K562 (cell line): ENCODE measurements at regions of chr3 and their contacts with region 1.

Region 1: DNA sequence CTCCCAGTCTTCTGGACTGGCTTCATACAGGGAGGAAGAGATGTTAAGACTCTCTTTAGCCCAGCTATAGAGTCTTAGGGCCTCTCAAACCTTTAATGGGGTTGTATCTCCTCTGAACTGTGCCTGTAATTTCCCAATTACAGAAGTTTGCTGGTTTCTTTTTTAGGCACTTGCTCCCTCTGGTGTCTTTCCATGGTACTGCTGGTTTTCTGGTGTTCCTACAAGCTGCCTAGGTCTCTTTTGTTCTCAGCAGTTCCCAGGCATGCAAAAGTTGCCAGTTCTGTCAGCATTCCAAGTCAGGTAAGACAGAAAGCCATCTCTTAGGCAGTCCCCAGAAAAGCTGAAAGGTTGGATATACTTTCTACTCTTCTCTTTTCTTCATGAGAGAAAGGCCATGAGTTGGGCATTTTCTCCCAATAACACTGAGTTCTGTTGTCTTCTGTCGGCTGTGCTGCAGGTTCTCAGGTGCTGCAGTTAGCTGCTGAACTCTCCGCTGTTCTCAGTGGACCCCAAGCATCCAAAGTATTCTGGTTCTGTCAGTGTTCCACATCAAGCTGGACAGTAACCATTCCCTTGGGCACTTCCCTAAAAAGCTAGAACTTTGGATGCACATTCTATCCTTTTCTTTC is 54.4 kb upstream of the EHHADH start:
- DNase-seq: peak; percentile 62 to 79 (median 62)
- ATAC-seq: peak; percentile 85
- H3K4me3 ChIP-seq: no peak overlapping the region
- H3K27ac ChIP-seq: no peak overlapping the region
- H3K4me1 ChIP-seq: no peaks in the 10 kb centered on the region
- H3K27me3 ChIP-seq: no peaks in the 10 kb centered on the region
- CTCF ChIP-seq: peak; percentile 77 to 86 (median 82)
- EP300 ChIP-seq: no peak
- POLR2A ChIP-seq: no peak
- RAD21 ChIP-seq: peak; percentile 71 to 85

Region 2: DNA sequence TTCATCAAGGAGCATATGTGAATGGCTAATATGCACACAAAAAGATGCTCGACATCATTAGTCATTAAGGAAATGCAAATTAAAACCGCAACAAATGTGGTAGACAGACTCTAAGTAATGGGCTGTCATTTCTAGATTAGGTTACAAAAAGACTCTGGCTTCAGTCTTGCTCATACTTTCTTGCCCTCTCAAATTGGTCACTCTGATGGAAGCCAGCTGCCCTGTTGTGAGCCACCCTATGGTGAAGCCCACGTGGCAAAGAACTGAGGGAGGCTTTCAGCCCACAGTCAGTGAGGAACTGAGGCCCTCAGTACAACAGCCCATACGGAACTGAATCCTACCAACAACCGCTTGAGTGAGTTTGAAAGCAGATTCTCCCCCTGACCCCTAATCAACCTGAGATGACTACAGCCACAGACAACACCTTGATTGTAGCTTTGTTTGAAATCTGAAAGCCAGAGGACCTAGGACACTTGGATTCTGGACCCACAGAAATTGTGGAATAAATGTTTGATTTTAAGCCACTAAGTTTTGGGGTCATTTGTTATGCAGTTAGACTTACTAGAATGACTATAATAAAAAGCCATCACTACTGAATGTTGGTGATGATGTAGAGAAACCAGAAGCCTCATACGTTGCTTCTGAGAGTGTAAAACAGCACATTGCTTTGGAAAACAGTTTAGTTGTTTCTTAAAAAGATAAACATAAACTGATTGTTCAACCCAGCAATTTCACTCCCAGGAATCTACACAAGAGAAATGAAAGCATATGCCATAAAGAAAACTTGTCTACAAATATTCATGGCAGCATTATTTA is 100.1 kb before region 1 on chr3:
- CTCF ChIA-PET with region 1: no interaction called
- POLR2A ChIA-PET with region 1: no interaction called
- in situ Hi-C with region 1: no loop called
- intact Hi-C with region 1: no loop called
- DNase-seq: no peak
- ATAC-seq: no peak
- H3K4me3 ChIP-seq: no peak overlapping the region
- H3K27ac ChIP-seq: no peak overlapping the region
- H3K4me1 ChIP-seq: no peaks in the 10 kb centered on the region
- H3K27me3 ChIP-seq: no peaks in the 10 kb centered on the region
- CTCF ChIP-seq: no peak
- EP300 ChIP-seq: no peak
- POLR2A ChIP-seq: no peak
- RAD21 ChIP-seq: no peak

Region 3: DNA sequence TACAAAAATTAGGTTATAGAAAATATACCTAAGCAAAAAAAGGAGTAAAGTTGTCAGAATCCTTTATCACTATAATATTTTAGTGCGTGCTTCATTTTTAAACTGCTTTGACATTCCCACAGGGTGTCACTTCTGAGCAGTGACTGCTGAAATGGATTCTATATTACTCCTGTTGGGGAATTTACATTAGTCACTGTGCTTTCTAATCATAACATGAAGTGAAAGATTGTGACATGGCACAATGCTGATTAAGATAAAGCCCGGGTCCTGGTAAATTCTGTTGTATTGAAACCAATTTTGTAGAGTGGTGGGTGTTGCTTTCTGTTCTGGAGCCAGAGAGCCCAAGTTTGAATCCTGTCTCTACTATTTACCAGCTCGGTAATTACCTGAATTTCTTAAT is 18.0 kb before region 1 on chr3:
- CTCF ChIA-PET with region 1: no interaction called
- POLR2A ChIA-PET with region 1: no interaction called
- in situ Hi-C with region 1: no loop called
- intact Hi-C with region 1: loop called (anchors 1 kb)
- DNase-seq: peak in 2 of 4 experiments; percentile 20 to 42
- ATAC-seq: peak; percentile 77
- H3K4me3 ChIP-seq: no peak overlapping the region
- H3K27ac ChIP-seq: peak overlapping the region; percentile 21; the same call in 1 of the 3 replicates
- H3K4me1 ChIP-seq: peaks cover 1 to 4% of the 10 kb centered on the region in 2 experiments; a peak in 3 of 5 replicates
- H3K27me3 ChIP-seq: no peaks in the 10 kb centered on the region
- CTCF ChIP-seq: peak in 2 of 3 experiments; percentile 7 to 43; a peak in 3 of 6 replicates
- EP300 ChIP-seq: no peak
- POLR2A ChIP-seq: no peak
- RAD21 ChIP-seq: peak in 1 of 2 experiments; percentile 38; a peak in 1 of 4 replicates

Region 4: GRCh38 chr3:185381320-185382058 is 73.2 kb after region 1 on chr3:
- CTCF ChIA-PET with region 1: no interaction called
- POLR2A ChIA-PET with region 1: no interaction called
- in situ Hi-C with region 1: no loop called
- intact Hi-C with region 1: no loop called
- DNase-seq: no peak
- ATAC-seq: no peak
- H3K4me3 ChIP-seq: no peak overlapping the region
- H3K27ac ChIP-seq: no peak overlapping the region
- H3K4me1 ChIP-seq: no peaks in the 10 kb centered on the region
- H3K27me3 ChIP-seq: peaks cover 7 to 8% of the 10 kb centered on the region in 2 experiments; a peak in 4 of 5 replicates
- CTCF ChIP-seq: no peak
- EP300 ChIP-seq: no peak
- POLR2A ChIP-seq: no peak
- RAD21 ChIP-seq: no peak